ENCODE measurements at regions of chr19 and their contacts with region 1.

Region 1: DNA sequence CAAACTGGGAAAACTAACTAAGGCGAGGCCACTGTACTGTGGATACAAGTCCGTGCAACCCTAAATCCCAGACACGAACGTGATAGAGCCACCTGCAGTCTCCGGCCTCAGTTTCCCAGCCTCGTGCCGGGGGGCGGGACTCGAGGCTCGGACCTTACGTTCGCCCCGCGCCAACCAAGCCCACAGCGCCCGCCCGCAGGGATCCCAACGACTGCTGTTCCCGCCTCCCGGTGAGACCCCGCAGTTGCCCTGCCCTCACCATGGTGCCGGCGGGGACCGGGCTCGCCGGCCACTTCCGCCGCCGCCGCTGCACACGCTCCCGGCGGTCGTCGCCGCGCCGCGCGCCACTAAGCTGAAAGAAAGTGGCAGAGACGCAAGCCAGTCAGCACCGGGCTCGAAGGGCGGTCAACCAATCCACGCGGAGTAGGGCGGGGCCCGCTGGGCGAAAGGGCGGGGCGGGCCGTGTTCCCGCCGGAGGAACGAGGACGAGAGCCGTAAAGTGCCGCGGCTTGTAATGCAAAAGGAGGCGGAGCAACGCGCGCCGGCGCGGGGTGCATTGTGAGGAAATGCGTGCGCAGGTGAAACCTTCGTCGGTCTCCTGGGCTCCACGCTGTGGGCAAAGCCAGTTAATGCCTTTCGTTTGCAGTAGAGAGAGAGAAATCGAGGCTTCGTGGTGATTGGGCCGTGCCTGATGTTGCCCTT is at the start of gene LSM4:
- DNase-seq: peak; percentile 89
- H3K4me3 ChIP-seq: peak within 1 kb of the TSS; percentile 79
- H3K27ac ChIP-seq: peak within 1 kb of the TSS; percentile 69
- H3K27me3 ChIP-seq: no peaks in the 10 kb centered on the region
- CTCF ChIP-seq: peak; percentile 33
- polyA plus RNA-seq, gene LSM4: 58.6 and 69.3 TPM in 2 replicates

Region 2: GRCh38 chr19:18304458-18305310 is 18.2 kb before region 1 on chr19:
- CTCF ChIA-PET with region 1: no interaction called
- POLR2A ChIA-PET with region 1: interaction called, 14 read pairs
- DNase-seq: no peak
- H3K4me3 ChIP-seq: peak overlapping the region; percentile 52
- H3K27ac ChIP-seq: peak overlapping the region; percentile 98
- H3K27me3 ChIP-seq: no peaks in the 10 kb centered on the region
- CTCF ChIP-seq: no peak

Region 3: GRCh38 chr19:18349524-18350128 is 26.7 kb after region 1 on chr19:
- CTCF ChIA-PET with region 1: no interaction called
- POLR2A ChIA-PET with region 1: no interaction called
- DNase-seq: no peak
- H3K4me3 ChIP-seq: no peak overlapping the region
- H3K27ac ChIP-seq: no peak overlapping the region
- H3K27me3 ChIP-seq: no peaks in the 10 kb centered on the region
- CTCF ChIP-seq: peak; percentile 86

Region 4: GRCh38 chr19:18428787-18429674 is 106.1 kb after region 1 on chr19:
- CTCF ChIA-PET with region 1: no interaction called
- POLR2A ChIA-PET with region 1: no interaction called
- DNase-seq: no peak
- H3K4me3 ChIP-seq: no peak overlapping the region
- H3K27ac ChIP-seq: peak overlapping the region; percentile 21
- H3K27me3 ChIP-seq: no peaks in the 10 kb centered on the region
- CTCF ChIP-seq: no peak

Region 5: GRCh38 chr19:18514800-18515651 is 192.1 kb after region 1 on chr19:
- CTCF ChIA-PET with region 1: no interaction called
- POLR2A ChIA-PET with region 1: no interaction called
- DNase-seq: no peak
- H3K4me3 ChIP-seq: no peak overlapping the region
- H3K27ac ChIP-seq: peak overlapping the region; percentile 40
- H3K27me3 ChIP-seq: no peaks in the 10 kb centered on the region
- CTCF ChIP-seq: no peak